Mammary epithelial cell (primary cell): ENCODE measurements at regions of chr18 and their contacts with region 1.

Region 1: DNA sequence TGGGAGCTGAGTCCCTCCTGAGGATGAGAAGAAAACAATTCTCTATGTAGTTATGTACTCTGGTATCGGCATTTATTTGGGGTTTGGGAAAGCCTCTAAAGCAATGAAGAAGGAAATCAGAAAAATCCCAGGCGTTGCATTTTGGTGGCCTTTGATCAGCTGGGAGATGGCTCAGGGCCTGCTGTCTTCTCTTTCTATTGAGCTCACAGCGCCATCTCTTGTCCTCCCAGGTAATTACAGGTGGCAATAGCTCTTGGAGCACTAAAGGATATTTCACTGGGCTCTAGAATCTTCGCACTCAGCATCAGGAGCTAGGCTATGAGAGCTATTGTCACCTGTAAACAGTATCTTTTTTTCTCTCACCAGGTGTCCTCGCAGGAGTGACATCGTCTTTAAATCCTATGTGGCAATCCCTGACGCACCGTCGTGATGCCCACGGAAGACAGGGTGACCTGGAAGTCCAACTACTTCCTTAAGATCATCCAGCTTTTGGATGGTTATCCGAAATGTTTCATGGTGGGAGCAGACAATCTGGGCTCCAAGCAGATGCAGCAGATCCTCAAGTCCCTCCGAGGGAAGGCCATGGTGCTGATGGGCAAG is 76.1 kb upstream of the PMAIP1 start:
- DNase-seq: peak; percentile 62
- H3K4me3 ChIP-seq: no peak overlapping the region
- H3K27ac ChIP-seq: no peak overlapping the region
- H3K4me1 ChIP-seq: no peaks in the 10 kb centered on the region
- H3K27me3 ChIP-seq: no peaks in the 10 kb centered on the region
- CTCF ChIP-seq: peak; percentile 90 to 93

Region 2: DNA sequence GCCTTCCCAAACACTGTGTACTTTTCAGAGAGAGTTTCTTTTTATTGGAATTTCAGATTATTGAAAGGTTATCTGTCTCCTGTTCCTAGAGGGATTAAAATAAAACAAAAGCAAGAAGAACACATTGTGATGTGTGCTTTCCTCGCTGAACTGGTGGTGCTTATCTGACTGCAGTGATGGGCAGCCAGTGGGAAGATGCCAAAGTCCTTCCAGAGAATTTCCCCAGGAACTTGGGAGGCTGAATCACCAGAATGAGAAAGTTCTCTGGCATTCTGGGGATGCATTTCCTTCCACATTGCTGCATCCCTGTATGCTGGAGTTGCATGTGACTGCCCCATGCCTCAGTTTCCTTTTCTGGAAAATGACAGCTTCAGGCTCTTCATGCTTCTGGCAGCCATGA is 737.9 kb before region 1 on chr18:
- CTCF ChIA-PET with region 1: no interaction called
- dilution Hi-C with region 1: no loop called
- in situ Hi-C with region 1: no loop called
- intact Hi-C with region 1: loop called (anchors 5 kb)
- DNase-seq: no peak
- H3K4me3 ChIP-seq: no peak overlapping the region
- H3K27ac ChIP-seq: no peak overlapping the region
- H3K4me1 ChIP-seq: no peaks in the 10 kb centered on the region
- H3K27me3 ChIP-seq: no peaks in the 10 kb centered on the region
- CTCF ChIP-seq: no peak

Region 3: GRCh38 chr18:59308248-59308937 is 515.3 kb before region 1 on chr18:
- CTCF ChIA-PET with region 1: no interaction called
- dilution Hi-C with region 1: no loop called
- in situ Hi-C with region 1: no loop called
- intact Hi-C with region 1: loop called (anchors 1 kb)
- DNase-seq: peak; percentile 54
- H3K4me3 ChIP-seq: peak overlapping the region; percentile 20 to 43 (median 42)
- H3K27ac ChIP-seq: no peak overlapping the region
- H3K4me1 ChIP-seq: peaks cover 5% of the 10 kb centered on the region
- H3K27me3 ChIP-seq: no peaks in the 10 kb centered on the region
- CTCF ChIP-seq: peak; percentile 57 to 83

Region 4: GRCh38 chr18:59631583-59632181 is 192.0 kb before region 1 on chr18:
- CTCF ChIA-PET with region 1: interaction called, 25 read pairs
- dilution Hi-C with region 1: loop called (anchors 5 kb)
- in situ Hi-C with region 1: loop called (anchors 5 kb)
- intact Hi-C with region 1: loop called (anchors 1 kb)
- DNase-seq: peak; percentile 23
- H3K4me3 ChIP-seq: no peak overlapping the region
- H3K27ac ChIP-seq: no peak overlapping the region
- H3K4me1 ChIP-seq: no peaks in the 10 kb centered on the region
- H3K27me3 ChIP-seq: no peaks in the 10 kb centered on the region
- CTCF ChIP-seq: peak; percentile 73 to 90

Region 5: GRCh38 chr18:59697236-59697932 is 126.3 kb before region 1 on chr18 and contains the start of gene CCBE1:
- CTCF ChIA-PET with region 1: interaction called, 25 read pairs
- dilution Hi-C with region 1: no loop called
- in situ Hi-C with region 1: loop called in 1 of 2 experiments (anchors 5 kb)
- intact Hi-C with region 1: loop called (anchors 1 kb)
- DNase-seq: peak; percentile 78
- H3K4me3 ChIP-seq: peak within 1 kb of the TSS; percentile 42 to 85 (median 78)
- H3K27ac ChIP-seq: no peak within 1 kb of the TSS
- H3K4me1 ChIP-seq: peaks cover 30% of the 10 kb centered on the region
- H3K27me3 ChIP-seq: no peaks in the 10 kb centered on the region
- CTCF ChIP-seq: peak; percentile 86 to 98
- total RNA-seq, gene CCBE1: 0.50 to 18.4 TPM

Region 6: GRCh38 chr18:59715966-59716369 is 107.7 kb before region 1 on chr18:
- CTCF ChIA-PET with region 1: no interaction called
- dilution Hi-C with region 1: no loop called
- in situ Hi-C with region 1: no loop called
- intact Hi-C with region 1: loop called (anchors 5 kb)
- DNase-seq: peak; percentile 91
- H3K4me3 ChIP-seq: no peak overlapping the region
- H3K27ac ChIP-seq: no peak overlapping the region
- H3K4me1 ChIP-seq: peaks cover 45% of the 10 kb centered on the region
- H3K27me3 ChIP-seq: no peaks in the 10 kb centered on the region
- CTCF ChIP-seq: peak; percentile 3 to 25

Region 7: GRCh38 chr18:60110836-60111235 is 287.1 kb after region 1 on chr18:
- CTCF ChIA-PET with region 1: no interaction called
- dilution Hi-C with region 1: no loop called
- in situ Hi-C with region 1: no loop called
- intact Hi-C with region 1: no loop called
- DNase-seq: no peak
- H3K4me3 ChIP-seq: no peak overlapping the region
- H3K27ac ChIP-seq: no peak overlapping the region
- H3K4me1 ChIP-seq: no peaks in the 10 kb centered on the region
- H3K27me3 ChIP-seq: no peaks in the 10 kb centered on the region
- CTCF ChIP-seq: no peak